B cell (primary cell): ENCODE measurements at regions of chr12 and their contacts with region 1.

Region 1: DNA sequence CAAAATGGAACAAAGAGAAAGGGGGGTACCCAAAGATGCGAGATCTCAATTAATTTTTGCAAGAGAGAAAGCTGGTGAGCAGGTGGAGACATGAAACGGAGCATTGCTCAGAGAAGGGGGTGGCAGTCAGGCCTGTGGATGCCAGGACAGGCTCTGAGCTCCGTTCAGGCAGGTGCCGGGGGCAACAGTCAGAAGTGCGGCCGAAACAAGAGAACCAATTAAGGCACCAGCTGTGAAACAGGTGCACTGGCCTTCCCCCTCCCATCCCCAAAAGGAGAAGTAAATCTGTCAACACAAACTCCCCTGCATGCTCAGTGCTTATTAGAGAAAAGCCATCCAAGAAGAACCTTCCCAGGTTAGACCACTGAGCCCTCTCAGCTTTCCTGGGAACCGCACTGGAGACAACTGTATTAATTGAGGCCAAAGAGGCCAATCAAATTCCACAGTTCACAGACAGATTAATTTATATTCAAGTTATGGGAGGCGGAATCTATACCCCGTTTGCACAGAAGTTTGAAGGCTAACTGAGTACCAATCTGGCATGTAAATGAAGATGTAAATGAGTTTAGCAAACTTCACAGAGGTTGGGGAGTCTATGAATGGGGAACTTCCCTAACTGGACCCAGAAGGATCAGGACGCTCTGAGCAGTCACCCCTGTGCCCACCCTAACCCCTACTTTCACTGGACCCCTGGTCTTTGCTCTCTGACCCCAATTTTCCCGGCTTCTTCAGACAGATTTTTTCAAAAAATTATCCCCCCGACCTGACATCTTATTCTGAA is 20.9 kb downstream of the OAS2 start:
- DNase-seq: peak; percentile 78
- ATAC-seq: peak; percentile 93
- H3K4me3 ChIP-seq: no peak overlapping the region
- H3K4me3 Mint-ChIP-seq: peak overlapping the region; percentile 55
- H3K27ac ChIP-seq: peak overlapping the region; percentile 55 to 56
- H3K27ac Mint-ChIP-seq: peak overlapping the region; percentile 88
- H3K4me1 ChIP-seq: peaks cover 18 to 20% of the 10 kb centered on the region in 2 donors
- H3K4me1 Mint-ChIP-seq: peaks cover 25% of the 10 kb centered on the region
- H3K27me3 ChIP-seq: no peaks in the 10 kb centered on the region
- H3K27me3 Mint-ChIP-seq: no peaks in the 10 kb centered on the region
- CTCF ChIP-seq: no peak

Region 2: DNA sequence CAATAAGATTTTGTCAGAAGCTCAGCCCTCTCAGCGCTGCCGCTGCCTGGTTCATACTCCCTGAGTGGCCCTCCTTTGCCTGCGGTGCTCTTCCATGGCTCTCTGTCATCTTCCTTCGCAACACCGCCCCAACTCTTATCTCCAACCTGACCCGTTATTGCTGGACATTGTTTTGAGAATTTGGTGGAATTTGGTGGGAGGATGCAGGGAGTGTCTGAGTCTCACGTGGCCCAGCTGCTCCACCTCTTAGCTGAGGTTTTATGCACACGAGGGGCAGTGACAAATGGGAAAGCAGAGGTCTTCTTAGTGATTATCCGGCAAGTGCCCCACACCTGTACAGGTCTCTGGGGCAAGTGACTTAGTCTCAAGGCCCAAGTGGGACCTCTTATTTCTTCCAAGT is 305.1 kb before region 1 on chr12:
- CTCF ChIA-PET with region 1: no interaction called
- POLR2A ChIA-PET with region 1: no interaction called
- intact Hi-C with region 1: no loop called
- DNase-seq: no peak
- ATAC-seq: no peak
- H3K4me3 ChIP-seq: no peak overlapping the region
- H3K4me3 Mint-ChIP-seq: no peak overlapping the region
- H3K27ac ChIP-seq: no peak overlapping the region
- H3K27ac Mint-ChIP-seq: no peak overlapping the region
- H3K4me1 ChIP-seq: no peaks in the 10 kb centered on the region
- H3K4me1 Mint-ChIP-seq: no peaks in the 10 kb centered on the region
- H3K27me3 ChIP-seq: peaks cover 0 to under 1% (median 0%) of the 10 kb centered on the region in 4 experiments
- H3K27me3 Mint-ChIP-seq: peaks cover 14% of the 10 kb centered on the region
- CTCF ChIP-seq: no peak

Region 3: GRCh38 chr12:112939761-112940381 is 59.3 kb before region 1 on chr12:
- CTCF ChIA-PET with region 1: no interaction called
- POLR2A ChIA-PET with region 1: no interaction called
- intact Hi-C with region 1: no loop called
- DNase-seq: peak; percentile 79
- ATAC-seq: peak; percentile 64
- H3K4me3 ChIP-seq: peak overlapping the region in 3 of 5 experiments; percentile 21 to 38 (median 34)
- H3K4me3 Mint-ChIP-seq: peak overlapping the region; percentile 88
- H3K27ac ChIP-seq: peak overlapping the region; percentile 8 to 10
- H3K27ac Mint-ChIP-seq: peak overlapping the region; percentile 88
- H3K4me1 ChIP-seq: peaks cover 25 to 26% of the 10 kb centered on the region in 2 donors
- H3K4me1 Mint-ChIP-seq: peaks cover 26% of the 10 kb centered on the region
- H3K27me3 ChIP-seq: no peaks in the 10 kb centered on the region
- H3K27me3 Mint-ChIP-seq: no peaks in the 10 kb centered on the region
- CTCF ChIP-seq: no peak

Region 4: DNA sequence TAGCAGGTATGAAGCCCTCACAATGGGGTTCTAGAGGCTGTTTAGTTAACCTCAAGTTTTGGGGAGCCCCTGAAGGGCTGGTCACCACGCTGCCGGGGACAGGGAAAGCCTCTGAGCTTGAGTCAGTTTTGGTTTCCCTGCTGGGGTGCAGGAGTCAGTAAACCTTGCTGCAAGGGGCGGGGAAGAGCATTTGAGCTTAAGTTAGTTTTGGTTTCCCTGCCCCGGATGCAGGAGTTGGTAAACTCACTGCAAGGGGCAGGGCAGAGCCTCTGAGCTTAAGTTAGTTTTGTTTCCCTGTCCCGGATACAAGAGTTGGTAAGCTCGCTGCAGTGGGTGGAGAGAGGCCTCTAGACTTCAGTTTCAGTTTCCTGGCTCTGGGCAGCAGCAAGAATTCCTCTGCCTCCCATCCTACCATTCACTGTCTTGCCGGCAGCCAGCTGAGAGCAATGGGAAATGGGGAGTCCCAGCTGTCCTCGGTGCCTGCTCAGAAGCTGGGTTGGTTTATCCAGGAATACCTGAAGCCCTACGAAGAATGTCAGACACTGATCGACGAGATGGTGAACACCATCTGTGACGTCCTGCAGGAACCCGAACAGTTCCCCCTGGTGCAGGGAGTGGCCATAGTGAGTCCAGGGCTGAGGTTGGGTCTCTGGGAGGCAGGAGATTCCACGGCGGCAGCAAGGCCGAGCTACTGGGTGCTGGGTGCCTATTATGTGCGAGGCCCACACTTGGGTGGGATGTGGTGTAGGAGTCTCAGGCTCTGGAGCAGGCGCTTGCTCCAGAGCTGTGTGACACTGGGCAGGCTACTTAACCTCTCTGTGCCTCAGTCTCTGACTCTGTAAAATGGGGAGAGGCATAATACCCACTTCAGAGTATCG is 20.8 kb before region 1 on chr12 and contains the start of gene OAS2:
- CTCF ChIA-PET with region 1: interaction called, 50 read pairs
- POLR2A ChIA-PET with region 1: interaction called, 3 read pairs
- intact Hi-C with region 1: loop called (anchors 2 kb)
- DNase-seq: peak; percentile 92
- ATAC-seq: peak; percentile 94
- H3K4me3 ChIP-seq: peak within 1 kb of the TSS; percentile 70 to 94 (median 78)
- H3K4me3 Mint-ChIP-seq: peak within 1 kb of the TSS; percentile 98
- H3K27ac ChIP-seq: peak within 1 kb of the TSS; percentile 90 to 94
- H3K27ac Mint-ChIP-seq: peak within 1 kb of the TSS; percentile 98
- H3K4me1 ChIP-seq: peaks cover 39 to 40% of the 10 kb centered on the region in 2 donors
- H3K4me1 Mint-ChIP-seq: peaks cover 59% of the 10 kb centered on the region
- H3K27me3 ChIP-seq: no peaks in the 10 kb centered on the region
- H3K27me3 Mint-ChIP-seq: no peaks in the 10 kb centered on the region
- CTCF ChIP-seq: no peak
- total RNA-seq, gene OAS2: 57.4 and 59.3 TPM in 2 replicates